ENCODE measurements at regions of chr6 and their contacts with region 1.

Region 1: DNA sequence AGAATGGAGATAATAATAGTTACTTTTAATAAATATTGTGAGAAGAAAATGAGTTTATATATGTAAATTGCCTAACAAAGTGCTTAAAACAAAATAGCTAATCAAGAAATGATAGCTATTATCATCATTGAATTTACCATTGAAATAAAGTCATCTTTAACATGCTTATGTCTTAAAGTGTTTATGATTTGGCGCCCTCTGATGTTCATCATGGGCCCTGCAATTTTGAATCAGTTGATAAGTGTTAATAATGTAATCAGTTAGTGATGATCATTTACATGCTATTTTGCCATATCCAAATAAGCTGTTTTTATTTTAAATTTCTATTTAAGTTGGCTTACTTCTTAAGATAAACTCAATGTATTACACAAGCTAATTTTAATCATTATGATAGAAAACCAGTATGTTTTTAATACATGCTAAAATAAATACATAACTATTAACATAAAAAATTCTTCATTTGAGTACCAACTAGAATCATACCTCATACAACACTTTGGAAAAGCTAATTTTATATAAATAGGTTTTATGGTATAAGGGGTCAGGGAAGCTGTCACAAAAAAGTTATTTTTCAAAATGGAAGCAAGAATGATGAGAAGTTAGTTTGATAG is 39.2 kb upstream of the TPD52L1 start:
- DNase-seq: peak; percentile 24 to 71 (median 49)
- H3K4me3 ChIP-seq: no peak overlapping the region
- H3K27ac ChIP-seq: no peak overlapping the region
- H3K4me1 ChIP-seq: no peaks in the 10 kb centered on the region
- H3K27me3 ChIP-seq: no peaks in the 10 kb centered on the region
- CTCF ChIP-seq: peak; percentile 60 to 83 (median 76)
- EP300 ChIP-seq: no peak
- POLR2A ChIP-seq: no peak

Region 2: DNA sequence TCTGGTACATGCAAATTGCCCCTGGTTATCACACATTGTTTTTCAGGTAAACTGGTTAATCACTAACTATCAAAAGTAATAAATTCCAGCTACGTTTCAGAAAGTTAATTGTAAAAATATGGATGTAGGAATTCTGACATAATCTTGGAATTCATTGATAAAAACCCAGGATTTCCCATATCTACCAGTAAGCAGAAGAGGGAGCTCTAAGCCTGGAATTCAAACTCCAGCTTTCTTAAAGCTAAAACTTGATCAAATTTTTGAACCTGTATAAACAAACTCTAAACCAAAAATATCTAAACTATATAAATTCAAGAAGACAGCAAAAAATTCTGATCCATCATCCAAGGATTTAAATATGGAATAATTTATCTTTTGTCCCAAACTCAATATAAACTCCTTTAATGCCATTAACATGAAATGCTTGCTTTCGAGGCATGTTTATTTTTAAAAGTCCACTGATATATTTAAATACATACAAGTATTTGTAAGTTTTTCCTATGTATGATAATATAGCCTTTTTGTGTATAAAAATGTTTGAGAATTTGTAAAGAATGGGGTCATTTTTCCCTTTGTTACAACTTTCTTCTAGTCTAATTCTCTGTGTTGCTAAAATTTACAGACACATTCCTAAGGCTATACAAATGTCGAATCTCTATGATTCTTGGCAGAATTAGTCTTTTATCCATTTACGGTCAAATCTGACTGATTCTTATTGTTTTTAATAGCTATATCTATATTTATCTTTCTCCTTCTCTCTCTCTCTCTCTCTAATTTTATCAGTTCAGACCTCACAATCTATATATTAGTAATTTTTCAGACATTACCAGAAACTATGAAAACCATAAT is 243.5 kb before region 1 on chr6:
- intact Hi-C with region 1: loop called (anchors 2 to 5 kb)
- DNase-seq: no peak
- H3K4me3 ChIP-seq: no peak overlapping the region
- H3K27ac ChIP-seq: no peak overlapping the region
- H3K4me1 ChIP-seq: no peaks in the 10 kb centered on the region
- H3K27me3 ChIP-seq: no peaks in the 10 kb centered on the region
- CTCF ChIP-seq: peak; percentile 22 to 63 (median 51)
- EP300 ChIP-seq: no peak
- POLR2A ChIP-seq: no peak

Region 3: DNA sequence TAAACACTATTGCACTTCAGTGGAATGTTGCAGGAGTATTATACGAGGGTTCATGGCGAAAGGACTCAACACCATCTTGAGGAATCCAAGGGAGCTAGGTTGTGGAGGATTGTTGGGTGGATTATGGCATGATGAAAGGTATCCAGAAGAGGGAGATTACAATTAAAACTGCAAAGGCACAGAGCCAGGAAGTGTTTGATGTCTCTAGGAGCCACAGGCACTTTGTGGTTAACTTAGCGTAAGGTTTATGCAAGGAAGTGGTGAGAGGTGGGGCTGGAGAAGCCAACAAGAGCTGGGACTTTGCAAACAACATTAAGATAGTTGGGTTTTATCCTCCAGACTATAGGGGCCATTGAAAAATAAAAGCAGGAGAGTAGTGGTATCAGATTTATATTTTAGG is 47.4 kb before region 1 on chr6:
- intact Hi-C with region 1: no loop called
- DNase-seq: no peak
- H3K4me3 ChIP-seq: no peak overlapping the region
- H3K27ac ChIP-seq: no peak overlapping the region
- H3K4me1 ChIP-seq: no peaks in the 10 kb centered on the region
- H3K27me3 ChIP-seq: no peaks in the 10 kb centered on the region
- CTCF ChIP-seq: no peak
- EP300 ChIP-seq: no peak
- POLR2A ChIP-seq: no peak

Region 4: DNA sequence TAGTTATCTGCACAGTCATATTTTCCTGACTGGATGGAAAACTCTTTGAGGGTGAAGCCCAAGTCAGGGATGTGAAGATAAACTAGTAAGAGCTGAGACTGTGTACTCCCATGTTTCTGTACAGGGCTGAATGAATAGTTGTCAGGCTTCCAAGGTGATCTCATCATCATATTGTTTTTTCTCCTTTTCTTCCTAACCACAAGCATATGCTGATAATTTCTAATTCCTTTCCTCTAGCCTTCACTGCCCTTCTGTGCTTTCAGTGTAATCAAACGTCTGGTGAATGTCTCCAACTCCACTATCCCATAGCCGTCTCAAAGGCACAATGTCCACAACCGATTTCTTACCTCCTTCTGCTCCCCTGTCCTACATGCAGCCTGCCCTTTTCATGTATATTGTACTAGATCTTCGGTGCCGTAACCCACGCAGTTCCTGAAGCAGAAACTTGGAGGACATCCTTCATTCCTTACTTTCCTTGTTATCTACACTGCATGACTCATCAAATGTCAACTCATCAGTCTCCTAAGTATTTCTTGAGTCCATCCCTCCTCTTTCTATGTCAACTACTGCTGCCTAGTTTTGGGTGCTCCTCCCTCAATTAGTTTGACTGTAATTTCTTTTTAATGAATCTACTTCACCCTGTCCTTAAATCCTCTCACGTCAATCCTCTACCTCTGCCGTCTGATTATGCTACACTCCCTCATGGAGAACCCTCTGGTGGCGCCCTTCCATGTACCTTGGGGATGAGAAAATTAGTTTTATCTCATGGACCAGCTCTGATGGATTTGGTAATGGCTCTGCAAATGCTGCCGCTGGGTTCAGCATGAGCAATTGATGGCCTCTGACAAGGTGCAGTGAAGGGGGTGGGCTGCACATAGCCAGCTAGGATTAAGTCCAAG is 698.3 kb after region 1 on chr6:
- intact Hi-C with region 1: no loop called
- DNase-seq: no peak
- H3K4me3 ChIP-seq: no peak overlapping the region
- H3K27ac ChIP-seq: peak overlapping the region; percentile 9 to 67
- H3K4me1 ChIP-seq: peaks cover 16% of the 10 kb centered on the region
- H3K27me3 ChIP-seq: no peaks in the 10 kb centered on the region
- CTCF ChIP-seq: no peak
- EP300 ChIP-seq: no peak
- POLR2A ChIP-seq: no peak

Measured in ovary (tissue), 10 donors.